ENCODE measurements at regions of chr18 and their contacts with region 1.

Region 1: DNA sequence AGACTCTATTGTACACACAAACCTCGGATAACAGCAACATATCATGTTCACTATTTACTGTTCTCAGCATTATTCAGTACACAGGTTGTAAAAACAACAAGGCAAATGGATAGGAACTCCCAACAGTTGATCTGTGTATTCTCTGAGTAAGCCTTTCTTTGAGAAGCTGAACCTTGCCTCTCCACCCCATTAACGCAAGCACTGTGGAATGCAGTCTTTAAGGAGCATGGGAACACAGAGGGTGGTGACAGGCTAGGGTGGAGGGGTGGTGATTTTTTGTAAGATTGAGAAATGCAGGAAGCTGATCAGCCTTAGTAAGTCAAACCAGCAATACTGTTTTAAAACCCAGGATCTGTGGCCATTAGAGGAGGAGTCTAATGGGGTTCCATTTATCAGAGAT is 19.6 kb upstream of the SERPINB11 start:
- DNase-seq: peak; percentile 95
- H3K4me3 Mint-ChIP-seq: peak overlapping the region; percentile 65
- H3K27ac Mint-ChIP-seq: peak overlapping the region; percentile 100
- H3K4me1 Mint-ChIP-seq: peaks cover 39% of the 10 kb centered on the region
- H3K27me3 Mint-ChIP-seq: no peaks in the 10 kb centered on the region
- CTCF ChIP-seq: no peak

Region 2: DNA sequence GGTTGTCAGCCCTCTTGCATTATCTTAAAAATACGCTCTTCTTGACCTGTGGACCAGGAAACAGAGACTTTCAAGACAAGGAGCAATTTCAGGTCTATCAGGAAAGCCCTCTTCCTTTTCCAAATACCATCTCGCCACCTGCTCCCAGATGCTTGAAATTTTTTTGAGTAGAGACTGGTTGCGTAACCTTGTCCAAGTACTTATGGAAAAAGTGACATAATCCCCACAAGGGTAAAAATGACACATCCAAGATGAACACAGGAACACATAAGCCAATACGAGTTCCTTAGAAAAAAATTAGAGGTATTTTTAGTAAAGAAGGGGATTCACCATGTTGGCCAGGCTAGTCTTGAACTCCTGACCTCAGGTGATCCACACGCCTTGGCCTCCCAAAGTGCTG is 94.3 kb before region 1 on chr18:
- CTCF ChIA-PET with region 1: interaction called, 3 read pairs
- POLR2A ChIA-PET with region 1: interaction called, 22 read pairs
- intact Hi-C with region 1: loop called (anchors 2 kb)
- DNase-seq: peak; percentile 50
- H3K4me3 Mint-ChIP-seq: no peak overlapping the region
- H3K27ac Mint-ChIP-seq: no peak overlapping the region
- H3K4me1 Mint-ChIP-seq: peaks cover 52% of the 10 kb centered on the region
- H3K27me3 Mint-ChIP-seq: no peaks in the 10 kb centered on the region
- CTCF ChIP-seq: no peak

Region 3: DNA sequence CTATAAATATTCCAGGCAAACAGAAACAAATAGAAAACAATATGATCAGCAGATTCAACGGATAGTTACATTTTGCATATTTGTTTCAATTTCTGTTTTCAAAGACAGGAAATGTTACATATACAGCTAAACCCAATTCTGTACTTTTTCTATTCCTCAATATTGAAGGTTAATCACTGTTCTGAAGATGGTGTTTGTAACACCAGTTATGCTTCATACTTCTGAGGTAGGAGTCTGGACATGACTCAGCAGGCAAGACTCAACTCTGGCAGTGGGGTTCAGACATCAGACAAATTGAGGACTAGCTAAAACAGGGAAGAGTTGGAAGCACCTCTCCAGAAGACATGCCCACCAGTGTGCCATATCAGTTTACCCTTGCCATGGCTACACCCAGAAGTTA is 79.4 kb before region 1 on chr18:
- CTCF ChIA-PET with region 1: interaction called, 3 read pairs
- POLR2A ChIA-PET with region 1: interaction called, 18 read pairs
- intact Hi-C with region 1: no loop called
- DNase-seq: peak; percentile 55
- H3K4me3 Mint-ChIP-seq: no peak overlapping the region
- H3K27ac Mint-ChIP-seq: peak overlapping the region; percentile 6
- H3K4me1 Mint-ChIP-seq: peaks cover 18% of the 10 kb centered on the region
- H3K27me3 Mint-ChIP-seq: no peaks in the 10 kb centered on the region
- CTCF ChIP-seq: no peak

Region 4: DNA sequence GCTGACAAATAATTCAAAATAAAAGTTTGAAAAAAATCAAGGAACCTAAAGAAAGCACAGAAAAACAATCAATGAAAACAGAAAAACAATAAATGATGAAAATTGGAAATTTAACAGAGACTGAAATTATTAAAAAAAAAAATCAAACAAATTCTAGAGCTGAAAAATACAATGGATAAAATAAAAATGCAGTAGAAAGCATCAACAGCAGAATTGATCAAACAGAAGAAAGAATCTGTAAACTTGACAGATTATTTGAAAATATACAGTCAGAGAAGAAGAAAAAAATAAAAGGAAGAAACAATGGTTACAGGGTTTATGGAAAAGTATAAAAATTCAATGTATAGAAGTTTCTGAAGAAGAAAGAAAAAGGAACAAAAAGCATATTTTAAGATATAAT is 55.3 kb before region 1 on chr18:
- CTCF ChIA-PET with region 1: no interaction called
- POLR2A ChIA-PET with region 1: no interaction called
- intact Hi-C with region 1: no loop called
- DNase-seq: no peak
- H3K4me3 Mint-ChIP-seq: no peak overlapping the region
- H3K27ac Mint-ChIP-seq: no peak overlapping the region
- H3K4me1 Mint-ChIP-seq: no peaks in the 10 kb centered on the region
- H3K27me3 Mint-ChIP-seq: no peaks in the 10 kb centered on the region
- CTCF ChIP-seq: no peak

Region 5: GRCh38 chr18:63775166-63775730 is 92.1 kb after region 1 on chr18 and contains the start of gene SERPINB7:
- CTCF ChIA-PET with region 1: no interaction called
- POLR2A ChIA-PET with region 1: interaction called, 10 read pairs
- intact Hi-C with region 1: no loop called
- DNase-seq: peak; percentile 80
- H3K4me3 Mint-ChIP-seq: peak within 1 kb of the TSS; percentile 24
- H3K27ac Mint-ChIP-seq: peak within 1 kb of the TSS; percentile 21
- H3K4me1 Mint-ChIP-seq: peaks cover 43% of the 10 kb centered on the region
- H3K27me3 Mint-ChIP-seq: no peaks in the 10 kb centered on the region
- CTCF ChIP-seq: no peak
- total RNA-seq, gene SERPINB7: 2.6 and 3.0 TPM in 2 replicates

Measured in MCF 10A (cell line).